ENCODE measurements at regions of chr17 and their contacts with region 1.

Region 1: GRCh38 chr17:65294179-65294720 is 157.1 kb downstream of the RGS9 start:
- DNase-seq: peak; percentile 76
- H3K4me3 Mint-ChIP-seq: no peak overlapping the region
- H3K27ac Mint-ChIP-seq: no peak overlapping the region
- H3K4me1 Mint-ChIP-seq: peaks cover 4% of the 10 kb centered on the region
- H3K27me3 Mint-ChIP-seq: no peaks in the 10 kb centered on the region

Region 2: DNA sequence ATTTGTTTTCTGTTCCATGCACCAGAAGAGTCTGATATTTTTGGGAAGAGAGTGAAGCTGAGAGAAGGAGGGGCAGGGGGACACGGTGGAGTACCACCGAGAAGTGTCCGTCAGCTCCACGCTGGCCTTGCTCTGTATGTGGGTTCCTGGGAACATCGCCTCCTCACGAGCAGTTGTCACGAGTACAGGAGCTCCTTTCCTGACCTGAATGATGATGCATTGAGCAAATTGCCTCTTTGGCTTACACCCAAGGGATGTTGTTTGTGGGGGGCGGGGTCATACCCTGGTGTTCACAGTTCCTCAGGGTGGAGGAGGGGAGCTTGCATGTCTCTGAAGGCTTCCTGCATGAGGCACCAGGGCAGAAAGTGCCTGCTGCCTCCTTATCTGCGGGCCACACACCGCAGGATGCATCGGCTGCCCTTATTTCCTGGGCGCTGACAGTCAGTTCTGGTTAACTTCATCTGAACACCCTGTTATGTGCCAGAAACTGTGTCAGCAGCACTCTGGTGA is 120.9 kb before region 1 on chr17:
- CTCF ChIA-PET with region 1: no interaction called
- intact Hi-C with region 1: no loop called
- DNase-seq: peak; percentile 85
- H3K4me3 Mint-ChIP-seq: no peak overlapping the region
- H3K27ac Mint-ChIP-seq: peak overlapping the region; percentile 55
- H3K4me1 Mint-ChIP-seq: peaks cover 11% of the 10 kb centered on the region
- H3K27me3 Mint-ChIP-seq: no peaks in the 10 kb centered on the region

Region 3: DNA sequence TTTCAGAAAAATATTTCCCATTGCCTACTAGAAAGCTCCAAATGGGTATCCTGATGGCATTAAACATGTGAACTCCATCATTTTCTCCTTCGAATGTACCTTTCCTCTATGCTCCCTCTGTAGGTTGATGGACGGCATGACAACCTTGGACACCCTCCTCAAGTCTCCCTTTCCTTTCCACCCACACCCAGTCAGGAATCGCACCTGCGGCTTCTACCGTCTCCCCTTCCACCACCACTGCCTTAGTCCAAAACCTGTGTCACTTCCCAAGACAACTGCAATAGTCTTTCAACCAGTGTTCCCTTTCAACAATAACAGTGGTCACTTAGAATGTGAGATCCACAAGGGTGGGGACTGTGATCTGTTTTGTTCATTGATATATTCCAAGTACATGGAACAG is 500.3 kb after region 1 on chr17:
- CTCF ChIA-PET with region 1: interaction called, 11 read pairs
- intact Hi-C with region 1: loop called (anchors 1 kb)
- DNase-seq: no peak
- H3K4me3 Mint-ChIP-seq: no peak overlapping the region
- H3K27ac Mint-ChIP-seq: no peak overlapping the region
- H3K4me1 Mint-ChIP-seq: peaks cover 12% of the 10 kb centered on the region
- H3K27me3 Mint-ChIP-seq: peaks cover 2% of the 10 kb centered on the region

Region 4: GRCh38 chr17:65988081-65988850 is 694.0 kb after region 1 on chr17:
- CTCF ChIA-PET with region 1: interaction called, 9 read pairs
- intact Hi-C with region 1: loop called (anchors 1 kb)
- DNase-seq: peak; percentile 20
- H3K4me3 Mint-ChIP-seq: no peak overlapping the region
- H3K27ac Mint-ChIP-seq: no peak overlapping the region
- H3K4me1 Mint-ChIP-seq: no peaks in the 10 kb centered on the region
- H3K27me3 Mint-ChIP-seq: peaks cover 2% of the 10 kb centered on the region

Region 5: GRCh38 chr17:66165513-66166123 is 871.4 kb after region 1 on chr17:
- CTCF ChIA-PET with region 1: interaction called, 6 read pairs
- intact Hi-C with region 1: loop called (anchors 1 kb)
- DNase-seq: no peak
- H3K4me3 Mint-ChIP-seq: no peak overlapping the region
- H3K27ac Mint-ChIP-seq: no peak overlapping the region
- H3K4me1 Mint-ChIP-seq: peaks cover 4% of the 10 kb centered on the region
- H3K27me3 Mint-ChIP-seq: no peaks in the 10 kb centered on the region